Psoas muscle (tissue), 8 donors: ENCODE measurements at regions of chr4 and their contacts with region 1.

Region 1: GRCh38 chr4:83639849-83640493 is 104.1 kb downstream of the GPAT3 start:
- DNase-seq: no peak
- ATAC-seq: peak; percentile 82 to 94 (median 90)
- H3K4me3 ChIP-seq: no peak overlapping the region
- H3K27ac ChIP-seq: no peak overlapping the region
- H3K4me1 ChIP-seq: no peaks in the 10 kb centered on the region
- H3K27me3 ChIP-seq: no peaks in the 10 kb centered on the region
- CTCF ChIP-seq: peak; percentile 86

Region 2: DNA sequence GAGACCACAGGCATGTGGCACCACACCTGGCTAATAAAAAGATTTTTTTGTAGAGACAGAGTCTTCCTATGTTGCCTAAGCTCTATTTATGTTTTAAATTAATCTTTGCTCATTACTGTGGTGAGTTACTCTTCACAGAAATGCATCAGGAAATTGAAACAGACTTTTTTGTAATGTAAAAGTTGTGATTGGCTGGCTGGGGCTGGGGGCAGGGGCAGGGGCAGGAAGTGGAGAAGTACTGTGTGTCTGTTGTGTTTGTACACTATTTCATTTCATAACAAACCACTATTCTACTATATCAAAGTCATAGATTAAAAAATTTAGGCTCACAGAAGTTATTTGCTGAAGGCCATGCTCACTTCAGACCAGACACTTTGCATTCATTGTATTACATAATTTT is 136.0 kb before region 1 on chr4:
- intact Hi-C with region 1: loop called in 1 of 2 experiments (anchors 1 kb)
- DNase-seq: no peak
- ATAC-seq: no peak
- H3K4me3 ChIP-seq: no peak overlapping the region
- H3K27ac ChIP-seq: no peak overlapping the region
- H3K4me1 ChIP-seq: no peaks in the 10 kb centered on the region
- H3K27me3 ChIP-seq: no peaks in the 10 kb centered on the region
- CTCF ChIP-seq: no peak

Region 3: DNA sequence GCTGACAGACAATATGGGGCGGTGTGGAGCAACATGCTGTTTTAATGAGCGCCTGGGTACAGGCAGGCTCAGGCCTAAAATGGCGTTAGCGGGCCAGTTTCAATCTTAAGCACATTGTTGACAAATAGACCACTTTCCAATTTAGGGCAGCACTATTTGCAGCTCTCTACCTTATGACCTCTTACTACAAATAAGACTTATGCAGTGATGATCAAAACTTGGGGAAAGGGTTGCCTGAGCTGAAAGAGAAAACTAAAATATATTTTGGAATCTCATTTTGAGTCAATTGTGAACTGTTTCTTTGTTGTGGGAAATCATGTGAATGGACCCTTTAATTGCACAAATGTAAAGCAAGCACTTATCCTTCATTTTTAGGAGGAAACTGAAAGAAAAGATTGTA is 129.5 kb before region 1 on chr4:
- intact Hi-C with region 1: loop called (anchors 1 to 2 kb)
- DNase-seq: no peak
- ATAC-seq: no peak
- H3K4me3 ChIP-seq: no peak overlapping the region
- H3K27ac ChIP-seq: no peak overlapping the region
- H3K4me1 ChIP-seq: no peaks in the 10 kb centered on the region
- H3K27me3 ChIP-seq: no peaks in the 10 kb centered on the region
- CTCF ChIP-seq: no peak

Region 4: DNA sequence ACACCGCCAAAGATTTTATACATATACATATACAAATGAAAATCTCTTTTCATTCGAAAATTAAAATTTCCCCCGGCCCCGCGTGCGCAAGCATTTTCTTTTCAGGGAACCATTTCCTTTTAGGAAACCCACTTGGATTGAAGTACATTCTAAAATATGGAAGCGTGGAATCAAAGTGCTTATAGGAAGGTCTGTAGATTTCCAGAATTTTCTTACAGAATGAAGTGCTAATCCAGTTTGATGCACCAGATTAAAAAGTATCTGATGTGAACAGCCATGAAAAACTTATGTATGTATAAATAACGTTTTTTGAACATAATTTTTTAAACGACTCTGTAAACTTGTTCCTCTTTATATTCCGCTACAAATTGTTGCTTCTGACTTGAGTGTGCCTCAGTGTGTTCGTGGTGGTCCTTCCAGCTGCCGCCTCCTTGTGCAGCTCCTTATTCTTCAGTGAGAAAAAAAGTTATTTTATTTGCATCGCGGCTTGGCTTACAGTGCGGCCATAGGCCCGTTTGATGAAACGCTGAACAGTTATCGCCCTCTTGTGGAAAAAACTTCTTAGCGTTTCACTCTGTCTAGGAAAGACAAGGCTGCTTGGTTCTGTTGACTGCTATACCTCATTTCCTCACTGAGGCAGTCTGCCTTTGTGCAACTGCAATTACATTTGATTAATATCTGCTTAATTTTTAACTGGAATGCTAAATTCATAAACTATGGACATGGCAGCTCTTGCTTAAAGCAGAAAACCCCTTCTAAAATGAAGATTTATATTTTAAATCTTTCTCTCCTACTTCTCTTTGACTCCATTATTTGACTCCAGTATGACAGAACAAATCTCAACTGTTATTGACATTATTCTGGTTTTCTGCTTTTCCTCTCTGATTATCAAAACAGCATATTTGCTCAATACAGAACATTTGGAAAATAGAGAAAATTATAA is 863.8 kb after region 1 on chr4:
- intact Hi-C with region 1: loop called (anchors 10 kb)
- DNase-seq: no peak
- ATAC-seq: peak; percentile 55 to 65 (median 56)
- H3K4me3 ChIP-seq: no peak overlapping the region
- H3K27ac ChIP-seq: no peak overlapping the region
- H3K4me1 ChIP-seq: peaks cover 3% of the 10 kb centered on the region
- H3K27me3 ChIP-seq: peaks cover 7 to 89% (median 31%) of the 10 kb centered on the region in 3 donors
- CTCF ChIP-seq: peak; percentile 63